ENCODE measurements at regions of chr11 and their contacts with region 1.

Region 1: GRCh38 chr11:122754553-122755322 is 83.6 kb upstream of the CRTAM start:
- DNase-seq: peak in 4 of 5 donors; percentile 42 to 51 (median 44)
- H3K4me3 ChIP-seq: no peak overlapping the region
- H3K4me3 Mint-ChIP-seq: peak overlapping the region in 3 of 8 donors; percentile 30 to 49 (median 35)
- H3K27ac ChIP-seq: no peak overlapping the region
- H3K27ac Mint-ChIP-seq: peak overlapping the region in 5 of 7 donors; percentile 3 to 84 (median 54)
- H3K4me1 ChIP-seq: peaks cover 29% of the 10 kb centered on the region
- H3K4me1 Mint-ChIP-seq: peaks cover 31 to 58% (median 46%) of the 10 kb centered on the region in 4 donors
- H3K27me3 ChIP-seq: no peaks in the 10 kb centered on the region
- H3K27me3 Mint-ChIP-seq: no peaks in the 10 kb centered on the region

Region 2: GRCh38 chr11:122637541-122637940 is 117.2 kb before region 1 on chr11:
- CTCF ChIA-PET with region 1: interaction called, 472 read pairs
- POLR2A ChIA-PET with region 1: interaction called, 12 read pairs
- intact Hi-C with region 1: loop called (anchors 1 kb)
- DNase-seq: peak in 3 of 5 donors; percentile 25 to 30 (median 30)
- H3K4me3 ChIP-seq: no peak overlapping the region
- H3K4me3 Mint-ChIP-seq: no peak overlapping the region
- H3K27ac ChIP-seq: no peak overlapping the region
- H3K27ac Mint-ChIP-seq: peak overlapping the region in 3 of 7 donors; percentile 66 to 78 (median 75)
- H3K4me1 ChIP-seq: peaks cover 4% of the 10 kb centered on the region
- H3K4me1 Mint-ChIP-seq: peaks cover 2 to 9% (median 6%) of the 10 kb centered on the region in 4 donors
- H3K27me3 ChIP-seq: no peaks in the 10 kb centered on the region
- H3K27me3 Mint-ChIP-seq: no peaks in the 10 kb centered on the region

Region 3: DNA sequence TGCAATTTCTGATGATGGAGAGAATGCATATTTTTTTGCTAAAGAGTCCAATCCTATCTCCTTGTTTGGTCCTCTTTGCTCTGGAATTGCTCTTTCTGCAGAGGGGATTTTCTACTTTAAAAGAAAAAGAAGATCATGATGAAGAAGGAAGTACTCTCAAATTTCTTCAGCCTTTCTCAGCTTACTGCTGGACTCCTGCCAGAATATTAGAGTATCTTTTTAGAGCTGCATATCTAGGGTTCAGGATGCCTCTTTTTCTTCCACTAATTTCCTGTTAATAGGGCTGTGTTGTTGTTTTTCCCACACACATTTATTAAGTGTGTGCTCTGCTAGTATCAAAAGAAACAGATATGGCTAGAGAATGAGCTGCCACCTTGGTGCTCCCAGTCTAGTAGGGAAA is 81.0 kb before region 1 on chr11:
- CTCF ChIA-PET with region 1: interaction called, 440 read pairs
- POLR2A ChIA-PET with region 1: interaction called, 82 read pairs
- intact Hi-C with region 1: no loop called
- DNase-seq: no peak
- H3K4me3 ChIP-seq: no peak overlapping the region
- H3K4me3 Mint-ChIP-seq: peak overlapping the region in 4 of 8 donors; percentile 22 to 60 (median 34)
- H3K27ac ChIP-seq: no peak overlapping the region
- H3K27ac Mint-ChIP-seq: peak overlapping the region in 6 of 7 donors; percentile 36 to 77 (median 61)
- H3K4me1 ChIP-seq: peaks cover 90% of the 10 kb centered on the region
- H3K4me1 Mint-ChIP-seq: peaks cover 50 to 91% (median 72%) of the 10 kb centered on the region in 4 donors
- H3K27me3 ChIP-seq: no peaks in the 10 kb centered on the region
- H3K27me3 Mint-ChIP-seq: no peaks in the 10 kb centered on the region

Region 4: GRCh38 chr11:122706291-122707088 is 48.2 kb before region 1 on chr11:
- CTCF ChIA-PET with region 1: interaction called, 32 read pairs
- POLR2A ChIA-PET with region 1: interaction called, 131 read pairs
- intact Hi-C with region 1: loop called (anchors 2 kb)
- DNase-seq: no peak
- H3K4me3 ChIP-seq: no peak overlapping the region
- H3K4me3 Mint-ChIP-seq: no peak overlapping the region
- H3K27ac ChIP-seq: no peak overlapping the region
- H3K27ac Mint-ChIP-seq: peak overlapping the region in 1 of 7 donors; percentile 0
- H3K4me1 ChIP-seq: peaks cover 11% of the 10 kb centered on the region
- H3K4me1 Mint-ChIP-seq: peaks cover 32 to 54% (median 40%) of the 10 kb centered on the region in 4 donors
- H3K27me3 ChIP-seq: no peaks in the 10 kb centered on the region
- H3K27me3 Mint-ChIP-seq: no peaks in the 10 kb centered on the region

Region 5: DNA sequence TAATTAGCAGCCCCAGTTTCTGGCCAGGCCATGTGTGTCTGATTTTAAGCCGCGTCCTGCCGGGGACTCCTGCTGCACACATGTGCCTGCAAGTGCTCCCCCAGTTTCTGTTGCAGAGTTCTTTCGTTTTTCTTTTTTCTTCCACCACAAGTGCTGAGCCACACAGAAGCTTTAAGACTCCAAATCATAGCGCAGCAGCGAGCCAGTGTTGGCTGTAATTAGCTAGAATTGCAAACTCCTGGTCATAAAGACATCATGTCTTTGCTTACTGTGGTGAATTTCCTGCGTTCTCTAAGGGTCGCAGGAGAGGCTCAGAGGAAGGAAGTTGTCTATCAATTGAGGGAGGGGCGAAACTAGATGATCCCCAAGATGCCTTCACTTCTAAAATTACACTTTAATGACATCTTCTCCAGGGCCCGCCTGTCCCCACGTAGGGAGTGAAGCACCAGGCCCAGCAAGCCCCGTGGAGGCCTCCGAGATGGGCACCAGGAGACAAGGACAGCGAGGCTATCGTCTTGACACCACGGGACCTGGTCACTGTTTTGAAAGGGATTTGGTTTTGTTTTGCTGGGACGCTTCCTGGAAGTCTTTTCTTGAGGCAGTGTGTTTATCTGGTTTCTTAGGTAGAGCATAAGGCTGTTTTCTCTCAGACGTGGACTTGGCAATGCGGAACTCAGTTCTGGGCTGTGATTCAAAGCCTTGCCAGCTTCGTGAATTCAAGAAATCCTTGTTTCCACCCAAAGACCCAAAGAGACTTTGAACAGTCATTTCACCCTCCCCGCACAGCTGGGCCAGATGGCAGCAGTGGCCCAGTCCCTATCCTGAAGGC is 27.4 kb before region 1 on chr11:
- CTCF ChIA-PET with region 1: interaction called, 46 read pairs
- POLR2A ChIA-PET with region 1: interaction called, 64 read pairs
- intact Hi-C with region 1: no loop called
- DNase-seq: peak in 4 of 5 donors; percentile 38 to 50 (median 47)
- H3K4me3 ChIP-seq: peak overlapping the region; percentile 9 to 38
- H3K4me3 Mint-ChIP-seq: peak overlapping the region; percentile 79 to 93 (median 88)
- H3K27ac ChIP-seq: peak overlapping the region; percentile 59
- H3K27ac Mint-ChIP-seq: peak overlapping the region; percentile 92 to 99 (median 95)
- H3K4me1 ChIP-seq: peaks cover 67% of the 10 kb centered on the region
- H3K4me1 Mint-ChIP-seq: peaks cover 51 to 66% (median 59%) of the 10 kb centered on the region in 4 donors
- H3K27me3 ChIP-seq: no peaks in the 10 kb centered on the region
- H3K27me3 Mint-ChIP-seq: no peaks in the 10 kb centered on the region

Region 6: GRCh38 chr11:122772945-122773344 is 18.2 kb after region 1 on chr11:
- CTCF ChIA-PET with region 1: interaction called, 133 read pairs
- POLR2A ChIA-PET with region 1: no interaction called
- intact Hi-C with region 1: no loop called
- DNase-seq: no peak
- H3K4me3 ChIP-seq: no peak overlapping the region
- H3K4me3 Mint-ChIP-seq: no peak overlapping the region
- H3K27ac ChIP-seq: no peak overlapping the region
- H3K27ac Mint-ChIP-seq: peak overlapping the region in 2 of 7 donors; percentile 75 to 76
- H3K4me1 ChIP-seq: no peaks in the 10 kb centered on the region
- H3K4me1 Mint-ChIP-seq: peaks cover 7 to 27% (median 14%) of the 10 kb centered on the region in 4 donors
- H3K27me3 ChIP-seq: no peaks in the 10 kb centered on the region
- H3K27me3 Mint-ChIP-seq: no peaks in the 10 kb centered on the region